HepG2 (cell line): ENCODE measurements at regions of chr20 and their contacts with region 1.

Region 1: DNA sequence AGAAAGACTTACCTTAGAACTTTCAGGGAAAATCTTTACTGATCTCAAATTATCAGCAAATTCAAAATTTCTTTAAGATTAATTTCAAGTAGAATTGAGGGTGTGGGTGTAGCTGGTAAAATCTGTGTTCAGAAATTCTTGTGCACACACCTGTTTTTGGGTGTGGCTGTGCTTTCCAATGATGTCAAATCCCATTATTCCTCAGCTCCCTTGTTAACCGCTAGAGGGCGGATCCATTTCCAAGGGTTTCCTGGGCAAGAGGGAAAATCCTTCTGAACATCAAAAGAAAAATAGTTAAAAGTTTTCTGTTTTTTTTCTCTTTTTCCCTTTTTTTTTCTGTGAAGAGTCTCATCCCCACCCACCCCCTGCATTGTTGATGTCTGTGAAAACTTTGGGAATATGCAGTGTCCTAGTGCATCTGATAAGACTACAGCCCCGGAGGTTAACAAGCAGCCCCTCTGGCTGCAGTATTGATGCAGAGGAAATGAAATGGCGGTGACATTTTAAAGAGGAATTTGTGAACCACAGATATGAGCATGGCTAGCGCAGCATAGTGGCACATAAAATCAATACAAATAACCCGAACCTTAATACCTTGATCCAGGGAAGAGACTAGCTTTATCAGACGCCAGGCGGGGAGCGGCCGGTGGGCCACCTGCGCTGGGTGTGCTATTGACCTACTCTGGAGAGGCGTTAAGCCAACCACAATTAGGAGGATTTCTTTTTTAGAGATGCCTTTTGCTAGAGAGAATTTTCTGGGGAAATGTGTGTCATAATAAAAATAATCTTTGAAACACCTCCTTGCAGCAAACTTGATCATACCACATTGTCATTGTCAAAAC is 130.9 kb downstream of the FOXA2 start:
- DNase-seq: peak; percentile 70
- ATAC-seq: peak; percentile 60; the same call in 2 of the 3 replicates
- H3K4me3 ChIP-seq: no peak overlapping the region
- H3K27ac ChIP-seq: no peak overlapping the region
- H3K4me1 ChIP-seq: peaks cover 27% of the 10 kb centered on the region
- H3K27me3 ChIP-seq: peaks cover 6 to 60% of the 10 kb centered on the region in 2 experiments
- CTCF ChIP-seq: peak; percentile 86
- EP300 ChIP-seq: no peak
- POLR2A ChIP-seq: no peak
- RAD21 ChIP-seq: peak; percentile 80

Region 2: DNA sequence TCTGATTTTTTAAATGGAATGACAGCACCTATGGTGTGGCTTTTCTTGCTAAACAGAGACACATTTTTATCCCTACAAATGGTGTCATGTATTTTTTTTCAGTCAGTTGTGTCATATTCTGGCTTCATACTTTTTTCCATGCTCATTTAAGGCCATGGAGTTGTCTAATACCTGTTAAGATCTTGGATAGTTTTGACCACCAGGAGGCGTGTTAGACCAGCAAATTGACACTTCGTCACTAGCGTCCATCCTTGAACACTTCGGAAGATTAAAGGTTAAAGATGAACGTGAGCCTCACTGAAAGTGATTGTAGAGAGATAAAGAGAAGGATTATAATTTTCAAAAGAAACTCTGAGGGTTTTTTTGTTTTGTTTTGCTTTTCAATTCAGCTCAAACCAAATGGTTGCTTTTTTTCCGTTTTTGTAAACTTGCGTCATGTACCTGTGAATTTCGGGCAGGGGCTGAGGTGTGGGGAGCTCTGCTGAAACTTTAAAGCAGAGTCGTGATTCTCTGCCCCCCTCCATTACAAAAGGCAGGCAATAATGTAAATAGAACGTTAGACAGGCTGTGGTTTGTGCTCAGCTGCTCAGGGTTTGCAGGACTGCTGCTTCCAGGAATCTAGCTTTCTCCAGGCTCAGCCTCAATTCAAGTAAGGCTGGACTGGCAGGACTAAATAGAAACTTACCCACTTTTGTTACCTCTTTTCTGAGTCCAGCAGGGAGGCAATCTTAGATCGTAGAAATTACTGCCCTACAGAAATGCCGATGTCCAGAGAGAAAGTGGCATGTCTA is 114.2 kb before region 1 on chr20:
- CTCF ChIA-PET with region 1: interaction called, 13 read pairs
- POLR2A ChIA-PET with region 1: no interaction called
- in situ Hi-C with region 1: loop called (anchors 5 kb)
- intact Hi-C with region 1: loop called (anchors 2 kb)
- DNase-seq: peak; percentile 84
- ATAC-seq: peak; percentile 77
- H3K4me3 ChIP-seq: no peak overlapping the region
- H3K27ac ChIP-seq: no peak overlapping the region
- H3K4me1 ChIP-seq: peaks cover 5% of the 10 kb centered on the region; the same call in 1 of the 2 replicates
- H3K27me3 ChIP-seq: peaks cover 0 to 9% of the 10 kb centered on the region in 2 experiments; a peak in 1 of 5 replicates
- CTCF ChIP-seq: peak; percentile 96
- EP300 ChIP-seq: no peak
- POLR2A ChIP-seq: no peak
- RAD21 ChIP-seq: peak; percentile 95

Region 3: GRCh38 chr20:22385602-22386305 is 67.7 kb before region 1 on chr20:
- CTCF ChIA-PET with region 1: interaction called, 15 read pairs
- POLR2A ChIA-PET with region 1: no interaction called
- in situ Hi-C with region 1: no loop called
- intact Hi-C with region 1: loop called (anchors 5 kb)
- DNase-seq: peak; percentile 75
- ATAC-seq: peak; percentile 94
- H3K4me3 ChIP-seq: no peak overlapping the region
- H3K27ac ChIP-seq: no peak overlapping the region
- H3K4me1 ChIP-seq: peaks cover 17% of the 10 kb centered on the region
- H3K27me3 ChIP-seq: peaks cover 0 to 45% of the 10 kb centered on the region in 2 experiments; a peak in 3 of 5 replicates
- CTCF ChIP-seq: peak; percentile 92
- EP300 ChIP-seq: no peak
- POLR2A ChIP-seq: no peak
- RAD21 ChIP-seq: peak; percentile 95

Region 4: GRCh38 chr20:22403632-22404361 is 49.7 kb before region 1 on chr20:
- CTCF ChIA-PET with region 1: no interaction called
- POLR2A ChIA-PET with region 1: no interaction called
- in situ Hi-C with region 1: no loop called
- intact Hi-C with region 1: loop called (anchors 2 kb)
- DNase-seq: peak; percentile 77
- ATAC-seq: peak; percentile 90
- H3K4me3 ChIP-seq: peak overlapping the region; percentile 47 to 69 (median 69)
- H3K27ac ChIP-seq: peak overlapping the region; percentile 17
- H3K4me1 ChIP-seq: peaks cover 47% of the 10 kb centered on the region
- H3K27me3 ChIP-seq: peaks cover 0 to 12% of the 10 kb centered on the region in 2 experiments; a peak in 3 of 5 replicates
- CTCF ChIP-seq: no peak
- EP300 ChIP-seq: 0 out of 4 replicates have a peak, but pooled peaks of 1 of the 2 experiments have one; percentile 33
- POLR2A ChIP-seq: no peak
- RAD21 ChIP-seq: 0 out of 2 replicates have a peak, but pooled peaks have one; percentile 7